ENCODE measurements at regions of chr6 and their contacts with region 1.

Region 1: DNA sequence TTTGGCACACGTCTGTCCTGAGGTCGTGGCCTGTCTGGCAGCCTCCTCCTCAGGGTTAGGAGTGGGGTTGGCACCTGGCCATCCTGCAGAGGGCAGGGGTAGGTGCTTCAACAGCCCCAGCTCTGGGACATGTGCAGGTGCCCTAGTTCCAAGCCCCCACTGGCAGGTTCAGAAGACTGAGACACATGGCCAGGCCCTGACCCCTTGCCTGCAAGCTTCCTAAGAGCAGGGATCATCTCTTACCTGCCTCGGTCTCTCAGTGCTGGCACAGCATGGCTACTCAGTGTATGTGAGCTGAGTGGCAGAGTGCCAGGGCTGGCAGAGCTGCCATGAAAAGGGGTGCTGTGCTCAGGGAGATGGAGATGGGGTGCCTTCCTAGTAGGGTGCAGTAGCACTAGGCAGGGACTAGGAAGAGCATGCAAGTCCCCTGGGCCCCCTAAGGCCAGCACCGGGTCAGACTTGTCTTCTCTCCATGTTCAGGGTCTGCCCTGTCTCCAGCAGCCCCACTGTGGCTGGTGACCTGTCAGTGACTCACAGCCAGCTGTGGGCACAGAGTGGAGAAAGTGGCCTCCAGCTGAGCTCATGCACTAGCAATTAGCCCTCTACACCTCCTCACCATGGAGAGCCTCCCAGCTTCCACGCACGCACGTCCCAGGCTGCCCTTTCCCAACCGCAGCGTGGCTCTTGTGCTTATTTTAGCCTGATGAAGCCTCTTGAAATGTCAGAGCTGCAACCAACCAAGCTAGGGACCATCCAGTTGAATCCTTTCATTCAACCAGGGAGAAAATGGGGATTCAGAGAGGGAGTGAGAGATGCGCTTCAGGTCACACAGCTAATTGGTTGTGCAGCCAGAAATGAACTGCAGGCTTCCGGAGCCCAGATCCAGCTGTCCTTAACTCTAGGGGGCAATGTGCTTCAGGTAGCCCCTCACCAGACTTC is 116.6 kb downstream of the MRPL14 start:
- DNase-seq: peak; percentile 74
- H3K4me3 Mint-ChIP-seq: no peak overlapping the region
- H3K27ac Mint-ChIP-seq: peak overlapping the region; percentile 58
- H3K4me1 Mint-ChIP-seq: peaks cover 57% of the 10 kb centered on the region
- H3K27me3 Mint-ChIP-seq: no peaks in the 10 kb centered on the region
- CTCF ChIP-seq: no peak

Region 2: DNA sequence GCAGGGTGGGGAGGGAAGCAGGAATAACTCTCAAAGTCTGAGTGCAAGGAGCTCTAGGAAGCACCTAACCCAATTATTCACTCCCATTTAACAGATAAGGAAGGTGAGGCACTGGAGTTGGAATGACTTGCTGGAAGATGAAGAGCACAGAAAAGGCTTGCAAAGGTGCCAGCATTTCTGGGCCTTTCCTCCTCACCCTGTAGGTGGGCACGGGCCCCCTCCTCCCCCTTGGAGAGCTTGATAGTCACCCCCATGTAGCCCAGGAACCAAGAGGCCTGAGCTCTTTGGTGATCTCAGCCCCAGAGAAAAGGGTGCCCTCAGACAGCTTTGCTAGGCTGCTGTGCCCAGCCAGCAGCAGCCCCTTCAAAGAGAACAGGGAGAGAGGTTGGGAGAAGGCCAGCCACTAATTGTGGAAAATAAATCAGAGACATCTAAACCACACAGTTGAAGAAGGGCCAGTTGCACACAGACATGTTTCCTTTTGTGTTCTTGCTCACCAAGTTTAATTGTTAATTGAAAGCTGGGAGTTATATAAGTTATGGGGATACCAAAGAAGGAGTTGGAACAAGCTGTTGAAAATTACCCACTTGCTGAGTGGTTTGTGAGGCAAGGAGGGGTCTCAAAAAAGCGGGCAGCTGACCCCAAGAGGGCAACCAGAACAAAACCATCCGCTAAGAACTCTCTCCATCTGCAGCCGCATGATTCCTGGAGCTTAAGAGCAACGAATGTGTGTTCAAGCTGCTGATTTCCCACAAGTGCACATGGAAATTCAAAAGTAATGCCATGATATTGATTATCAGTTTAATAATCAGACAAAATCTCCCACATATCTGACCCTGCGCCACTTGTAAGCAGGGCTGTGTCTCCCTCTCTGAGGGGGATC is 39.5 kb after region 1 on chr6:
- CTCF ChIA-PET with region 1: interaction called, 16 read pairs
- intact Hi-C with region 1: no loop called
- DNase-seq: no peak
- H3K4me3 Mint-ChIP-seq: no peak overlapping the region
- H3K27ac Mint-ChIP-seq: no peak overlapping the region
- H3K4me1 Mint-ChIP-seq: peaks cover 55% of the 10 kb centered on the region
- H3K27me3 Mint-ChIP-seq: no peaks in the 10 kb centered on the region
- CTCF ChIP-seq: no peak

Measured in Calu3 (cell line).